ENCODE measurements at regions of chr17 and their contacts with region 1.

Region 1: DNA sequence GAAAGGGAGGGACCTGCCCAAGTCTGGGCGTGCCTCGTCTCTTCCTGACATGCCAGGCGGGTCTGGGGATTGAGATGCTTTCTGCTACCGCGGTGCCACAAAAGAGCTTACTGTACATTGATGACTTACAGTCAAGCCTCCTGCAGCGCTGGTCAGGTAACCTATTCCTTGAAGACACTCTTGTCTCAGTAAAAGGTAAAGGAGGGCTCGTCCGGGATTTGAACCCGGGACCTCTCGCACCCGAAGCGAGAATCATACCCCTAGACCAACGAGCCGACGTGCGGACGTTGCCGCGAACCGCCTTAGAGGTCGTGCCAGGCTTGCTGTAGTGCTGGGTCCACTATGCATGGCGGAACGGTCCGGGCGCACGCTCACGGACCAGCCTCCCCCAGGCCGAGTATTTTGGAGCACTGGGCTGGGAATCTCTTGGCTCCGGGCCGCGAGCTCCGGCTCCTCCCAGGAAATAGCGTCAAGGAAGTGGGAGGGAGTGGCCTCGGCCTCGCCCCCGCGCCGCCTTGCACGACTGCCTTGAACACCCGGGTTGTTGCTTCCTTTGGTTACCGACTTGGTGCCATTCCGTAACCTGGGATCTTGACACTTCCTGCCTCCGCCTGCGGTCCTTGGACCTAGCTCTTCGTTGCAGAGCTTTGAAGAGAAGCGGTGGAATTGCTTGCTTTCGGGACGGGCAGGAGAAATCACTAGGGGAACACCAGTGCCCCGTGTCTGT is 12.4 kb upstream of the AURKB start:
- DNase-seq: peak; percentile 95 to 98
- H3K4me3 ChIP-seq: peak overlapping the region; percentile 64 to 69
- H3K27ac ChIP-seq: peak overlapping the region; percentile 96 to 99
- H3K4me1 ChIP-seq: peaks cover 0 to 36% (median 16%) of the 10 kb centered on the region in 4 donors
- H3K27me3 ChIP-seq: no peaks in the 10 kb centered on the region
- CTCF ChIP-seq: no peak

Region 2: GRCh38 chr17:7763919-7764318 is 458.9 kb before region 1 on chr17:
- intact Hi-C with region 1: no loop called
- DNase-seq: no peak
- H3K4me3 ChIP-seq: no peak overlapping the region
- H3K27ac ChIP-seq: no peak overlapping the region
- H3K4me1 ChIP-seq: no peaks in the 10 kb centered on the region
- H3K27me3 ChIP-seq: peaks cover 0 to 3% of the 10 kb centered on the region in 2 donors
- CTCF ChIP-seq: no peak

Region 3: DNA sequence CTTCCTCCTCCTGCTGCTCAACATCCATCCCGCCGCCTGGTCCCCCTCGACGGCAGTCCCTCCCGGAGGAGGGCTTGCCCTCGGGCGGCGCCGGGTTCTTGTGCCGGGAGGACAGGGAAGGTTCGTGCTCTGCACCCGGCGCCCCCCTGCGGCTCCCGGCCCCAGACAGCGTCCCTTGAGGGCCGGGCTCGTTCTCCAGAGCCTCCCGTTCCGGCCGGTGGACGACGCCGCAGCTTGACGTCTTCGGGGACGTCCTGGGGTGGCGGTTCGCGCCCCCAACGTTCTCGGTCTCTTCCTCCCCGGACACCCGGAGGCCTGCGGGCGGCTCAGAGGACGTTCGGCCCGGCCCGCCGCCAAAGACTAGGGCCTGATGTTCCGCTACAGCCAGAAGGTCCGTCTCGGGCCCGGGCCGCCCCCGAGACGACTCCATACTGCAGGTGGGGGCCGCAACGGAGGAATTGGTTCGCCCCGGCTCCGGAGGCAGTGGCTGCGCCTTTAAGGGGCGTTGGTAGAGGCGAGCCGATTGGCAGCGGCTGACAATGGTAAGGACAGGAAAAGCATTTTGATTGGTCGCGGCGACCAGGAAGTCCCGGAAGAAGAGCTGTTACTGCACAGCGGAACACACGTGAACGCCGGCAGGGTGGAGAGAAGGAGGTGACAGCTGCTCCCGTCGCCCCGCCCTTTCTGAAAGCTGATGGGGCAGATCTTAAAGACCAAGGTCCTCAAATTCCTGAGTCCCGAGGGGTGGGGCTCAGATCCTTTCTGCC is 32.9 kb before region 1 on chr17 and contains the start of gene BORCS6:
- intact Hi-C with region 1: loop called (anchors 1 kb)
- DNase-seq: peak; percentile 99
- H3K4me3 ChIP-seq: peak within 1 kb of the TSS; percentile 89 to 93
- H3K27ac ChIP-seq: peak within 1 kb of the TSS; percentile 97 to 98
- H3K4me1 ChIP-seq: peaks cover 0 to 40% (median 35%) of the 10 kb centered on the region in 4 donors
- H3K27me3 ChIP-seq: no peaks in the 10 kb centered on the region
- CTCF ChIP-seq: no peak

Region 4: DNA sequence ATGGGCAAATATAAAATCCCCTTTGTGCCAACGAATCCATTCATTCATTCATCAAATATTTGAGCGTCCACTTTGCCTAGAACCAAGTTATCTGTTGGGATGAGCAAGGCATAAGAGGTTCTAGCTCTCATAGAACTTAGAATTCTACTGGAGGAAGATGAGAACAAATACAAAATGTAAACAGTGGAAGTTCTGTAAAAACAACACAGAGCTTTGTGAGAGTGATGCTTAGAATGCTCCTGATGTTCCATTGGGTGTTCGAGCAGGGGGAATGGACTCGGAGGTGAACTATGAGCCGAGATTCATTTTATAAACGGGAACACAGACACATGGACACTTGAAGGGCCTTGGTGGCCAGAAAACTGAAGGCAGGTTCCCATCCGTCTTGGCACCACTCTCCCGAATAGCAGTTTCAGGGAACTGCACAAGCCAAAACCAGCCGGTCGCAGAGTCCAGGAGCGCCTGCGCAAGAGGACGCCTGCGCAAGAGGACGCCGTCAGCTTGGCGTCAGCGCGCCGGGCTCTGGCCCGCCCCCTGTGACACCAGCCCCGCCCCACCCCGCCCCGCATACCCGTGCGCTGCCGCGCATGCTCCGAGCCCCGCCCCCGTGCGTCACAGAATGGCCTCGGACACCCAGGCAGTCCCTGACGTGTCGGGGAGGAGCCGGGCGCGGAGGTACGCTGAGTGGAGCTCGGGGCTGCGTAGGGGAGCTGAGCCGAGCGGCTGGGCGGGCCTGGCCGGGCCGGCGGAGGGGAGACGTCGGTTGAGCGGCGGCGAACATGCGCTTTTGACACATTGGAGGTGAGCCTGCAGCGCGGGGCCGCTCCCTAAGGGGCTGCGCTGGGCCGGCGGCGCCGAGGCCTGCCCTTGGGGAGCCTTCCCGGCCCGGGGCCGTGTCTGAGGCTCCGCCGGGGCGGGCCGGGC is 212.7 kb after region 1 on chr17 and contains the start of gene NDEL1:
- intact Hi-C with region 1: no loop called
- DNase-seq: peak; percentile 99
- H3K4me3 ChIP-seq: peak within 1 kb of the TSS; percentile 87 to 90
- H3K27ac ChIP-seq: peak within 1 kb of the TSS; percentile 98 to 100
- H3K4me1 ChIP-seq: peaks cover 0 to 47% (median 14%) of the 10 kb centered on the region in 4 donors
- H3K27me3 ChIP-seq: no peaks in the 10 kb centered on the region
- CTCF ChIP-seq: peak in 1 of 2 experiments; percentile 6